CD14-positive monocyte (primary cell): ENCODE measurements at regions of chr5 and their contacts with region 1.

Region 1: DNA sequence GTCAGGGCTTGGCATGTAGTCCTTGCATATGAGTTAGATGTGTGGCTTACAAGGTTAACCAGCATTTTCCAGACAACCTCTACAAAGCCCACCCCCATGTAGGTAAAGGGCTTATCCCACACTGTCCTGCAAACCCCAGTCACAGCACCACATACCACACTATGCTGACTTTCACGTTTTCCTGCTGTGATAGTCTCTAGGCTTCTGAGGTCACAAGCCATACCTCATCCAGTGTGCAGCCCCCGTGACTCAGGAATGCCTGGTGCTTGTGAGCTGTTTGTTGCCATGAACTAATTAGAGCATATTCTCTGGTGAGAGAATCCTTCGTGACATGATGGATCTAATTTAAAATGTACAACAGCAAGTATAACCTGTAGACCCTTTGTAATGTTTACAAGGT is 50.8 kb downstream of the ERAP1 start:
- DNase-seq: no peak
- H3K4me3 ChIP-seq: no peak overlapping the region
- H3K4me3 Mint-ChIP-seq: no peak overlapping the region
- H3K27ac ChIP-seq: no peak overlapping the region
- H3K27ac Mint-ChIP-seq: peak overlapping the region in 2 of 7 donors; percentile 20 to 30
- H3K4me1 ChIP-seq: no peaks in the 10 kb centered on the region
- H3K4me1 Mint-ChIP-seq: no peaks in the 10 kb centered on the region
- H3K27me3 ChIP-seq: no peaks in the 10 kb centered on the region
- H3K27me3 Mint-ChIP-seq: peaks cover 0 to 2% (median 1%) of the 10 kb centered on the region in 3 donors
- CTCF ChIP-seq: no peak

Region 2: DNA sequence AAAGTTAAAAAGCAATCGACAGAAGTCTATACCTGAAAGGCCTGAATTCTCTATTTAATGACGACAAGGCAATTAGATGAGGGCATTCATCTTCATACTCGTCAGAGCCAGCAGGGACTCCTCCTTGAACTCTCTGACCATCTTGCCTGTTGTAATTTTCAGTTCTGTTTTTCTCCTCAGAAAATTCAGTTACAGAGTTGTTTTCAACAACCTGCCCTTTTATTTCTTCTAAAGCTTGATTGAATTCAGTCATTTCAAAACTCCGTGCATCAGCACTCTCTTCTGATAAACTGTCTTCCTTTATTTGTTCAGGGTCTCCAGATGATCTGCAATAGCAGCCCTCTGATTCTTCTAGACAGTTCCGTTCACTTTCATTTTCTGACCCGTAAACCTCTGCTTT is 410.4 kb after region 1 on chr5:
- intact Hi-C with region 1: loop called in 1 of 2 experiments (anchors 5 kb)
- DNase-seq: no peak
- H3K4me3 ChIP-seq: peak overlapping the region in 1 of 3 experiments; percentile 9
- H3K4me3 Mint-ChIP-seq: peak overlapping the region in 1 of 2 donors; percentile 38
- H3K27ac ChIP-seq: peak overlapping the region in 1 of 2 donors; percentile 76
- H3K27ac Mint-ChIP-seq: peak overlapping the region in 6 of 7 donors; percentile 65 to 90 (median 82)
- H3K4me1 ChIP-seq: peaks cover 4 to 11% of the 10 kb centered on the region in 2 donors
- H3K4me1 Mint-ChIP-seq: peaks cover 10% of the 10 kb centered on the region
- H3K27me3 ChIP-seq: no peaks in the 10 kb centered on the region
- H3K27me3 Mint-ChIP-seq: peaks cover 0 to 2% (median 0%) of the 10 kb centered on the region in 3 donors
- CTCF ChIP-seq: no peak